A673 (cell line): ENCODE measurements at regions of chr6 and their contacts with region 1.

Region 1: DNA sequence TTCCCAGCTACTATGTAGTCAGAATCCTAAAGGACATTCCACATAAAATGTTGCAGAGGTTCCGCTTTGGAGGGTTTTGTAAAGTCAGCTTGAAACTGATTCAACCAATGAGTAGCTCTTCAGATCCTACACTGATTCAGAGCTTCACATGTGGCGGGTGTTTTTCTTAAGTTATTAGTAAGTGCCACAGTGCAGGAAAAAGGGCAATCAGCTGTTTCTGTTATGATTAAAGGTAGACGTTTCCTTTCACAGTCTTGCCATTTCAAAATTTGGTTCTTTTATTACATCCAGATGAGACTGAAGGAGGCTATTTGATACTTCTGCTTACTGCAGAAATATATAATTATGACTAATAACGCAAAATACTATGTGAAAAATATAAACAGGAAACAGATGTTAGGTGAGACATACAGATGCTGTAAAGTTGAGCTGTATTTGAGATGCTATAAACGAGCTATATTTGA is 443.9 kb downstream of the CDKAL1 start:
- DNase-seq: peak; percentile 10
- H3K4me3 ChIP-seq: no peak overlapping the region
- H3K27ac ChIP-seq: no peak overlapping the region
- H3K4me1 ChIP-seq: no peaks in the 10 kb centered on the region
- H3K27me3 ChIP-seq: no peaks in the 10 kb centered on the region
- CTCF ChIP-seq: no peak

Region 2: GRCh38 chr6:21083708-21084107 is 105.5 kb after region 1 on chr6:
- CTCF ChIA-PET with region 1: interaction called, 10 read pairs
- POLR2A ChIA-PET with region 1: no interaction called
- intact Hi-C with region 1: no loop called
- DNase-seq: no peak
- H3K4me3 ChIP-seq: no peak overlapping the region
- H3K27ac ChIP-seq: no peak overlapping the region
- H3K4me1 ChIP-seq: peaks cover 3% of the 10 kb centered on the region
- H3K27me3 ChIP-seq: no peaks in the 10 kb centered on the region
- CTCF ChIP-seq: no peak

Region 3: GRCh38 chr6:21402368-21402767 is 424.2 kb after region 1 on chr6:
- CTCF ChIA-PET with region 1: no interaction called
- POLR2A ChIA-PET with region 1: no interaction called
- intact Hi-C with region 1: no loop called
- DNase-seq: no peak
- H3K4me3 ChIP-seq: no peak overlapping the region
- H3K27ac ChIP-seq: no peak overlapping the region
- H3K4me1 ChIP-seq: no peaks in the 10 kb centered on the region
- H3K27me3 ChIP-seq: no peaks in the 10 kb centered on the region
- CTCF ChIP-seq: no peak